PC-3 (cell line): ENCODE measurements at regions of chr1 and their contacts with region 1.

Region 1: GRCh38 chr1:179706339-179706941 is 36.7 kb upstream of the FAM163A start:
- DNase-seq: peak; percentile 54
- ATAC-seq: no peak
- H3K4me3 ChIP-seq: no peak overlapping the region
- H3K27ac ChIP-seq: no peak overlapping the region
- H3K4me1 ChIP-seq: no peaks in the 10 kb centered on the region
- H3K27me3 ChIP-seq: no peaks in the 10 kb centered on the region
- CTCF ChIP-seq: peak; percentile 86

Region 2: DNA sequence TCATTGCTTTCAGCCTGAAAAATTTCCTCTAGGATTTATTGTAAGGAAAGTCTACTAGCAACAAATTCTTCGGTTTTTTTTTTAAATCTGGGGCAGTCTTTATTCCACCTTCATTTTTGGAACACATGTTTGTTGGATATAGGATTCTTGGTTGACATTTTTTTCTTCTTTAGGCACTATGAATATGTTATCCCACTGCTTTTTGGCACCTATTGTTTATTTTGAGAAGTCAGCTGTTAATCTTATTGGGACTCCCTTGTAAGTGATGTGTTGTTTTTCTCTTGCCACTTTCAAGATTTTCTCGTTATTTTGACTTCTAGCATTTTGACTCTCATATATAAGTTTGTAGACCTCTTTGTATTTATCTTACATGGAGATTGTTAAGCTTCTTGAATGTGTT is 230.0 kb before region 1 on chr1:
- CTCF ChIA-PET with region 1: no interaction called
- POLR2A ChIA-PET with region 1: no interaction called
- intact Hi-C with region 1: no loop called
- DNase-seq: no peak
- ATAC-seq: no peak
- H3K4me3 ChIP-seq: no peak overlapping the region
- H3K27ac ChIP-seq: no peak overlapping the region
- H3K4me1 ChIP-seq: no peaks in the 10 kb centered on the region
- H3K27me3 ChIP-seq: no peaks in the 10 kb centered on the region
- CTCF ChIP-seq: no peak

Region 3: GRCh38 chr1:179770884-179771502 is 64.6 kb after region 1 on chr1:
- CTCF ChIA-PET with region 1: interaction called, 3 read pairs
- POLR2A ChIA-PET with region 1: no interaction called
- intact Hi-C with region 1: loop called (anchors 2 kb)
- DNase-seq: peak; percentile 22
- ATAC-seq: peak; percentile 51; the same call in 1 of the 2 replicates
- H3K4me3 ChIP-seq: no peak overlapping the region
- H3K27ac ChIP-seq: no peak overlapping the region
- H3K4me1 ChIP-seq: no peaks in the 10 kb centered on the region
- H3K27me3 ChIP-seq: no peaks in the 10 kb centered on the region
- CTCF ChIP-seq: peak; percentile 37

Region 4: DNA sequence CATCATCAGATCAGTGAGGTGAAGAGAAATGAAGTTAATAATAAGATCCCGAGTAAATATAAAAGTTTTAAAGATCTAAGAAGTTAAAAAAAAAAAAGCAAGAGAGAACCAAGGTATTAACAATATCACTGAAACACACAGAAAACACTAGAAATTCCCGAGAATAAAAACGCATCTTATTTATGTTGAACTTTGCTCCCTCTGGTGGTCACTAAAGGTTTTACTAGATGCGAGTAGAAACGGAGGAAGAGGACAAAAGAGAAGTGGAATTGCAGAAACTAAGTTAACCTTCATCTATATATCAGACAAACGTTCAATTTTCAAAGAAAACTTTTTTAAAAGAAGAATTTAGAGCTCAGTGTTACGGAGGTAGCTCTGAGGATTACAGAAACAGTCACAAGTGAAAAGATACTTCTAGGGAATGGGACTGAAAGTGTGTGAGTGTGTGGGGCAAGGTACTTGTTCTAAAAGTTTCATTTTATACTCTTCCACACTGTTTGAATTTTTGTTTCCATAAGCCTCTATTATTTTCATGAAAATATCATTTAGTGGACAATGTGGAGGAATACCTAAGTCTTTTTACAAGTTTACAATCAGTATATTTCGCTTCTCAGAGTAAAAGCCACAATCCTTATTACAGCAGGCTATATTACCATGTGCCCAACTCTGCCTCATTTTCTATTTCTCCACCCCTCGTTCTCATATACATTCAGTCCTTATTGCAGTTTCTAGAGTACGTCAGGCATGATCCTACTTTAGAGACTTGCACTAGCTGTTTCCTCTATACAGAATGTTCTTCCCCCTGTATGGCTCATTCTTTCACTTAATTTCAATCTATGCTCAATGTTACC is 776.2 kb after region 1 on chr1:
- CTCF ChIA-PET with region 1: no interaction called
- POLR2A ChIA-PET with region 1: no interaction called
- intact Hi-C with region 1: loop called (anchors 2 kb)
- DNase-seq: peak; percentile 59
- ATAC-seq: peak; percentile 55
- H3K4me3 ChIP-seq: no peak overlapping the region; the same call in 1 of the 2 replicates
- H3K27ac ChIP-seq: no peak overlapping the region
- H3K4me1 ChIP-seq: peaks cover 2% of the 10 kb centered on the region; the same call in 1 of the 2 replicates
- H3K27me3 ChIP-seq: no peaks in the 10 kb centered on the region
- CTCF ChIP-seq: peak; percentile 74